AG04449 (cell line): ENCODE measurements at regions of chr5 and their contacts with region 1.

Region 1: DNA sequence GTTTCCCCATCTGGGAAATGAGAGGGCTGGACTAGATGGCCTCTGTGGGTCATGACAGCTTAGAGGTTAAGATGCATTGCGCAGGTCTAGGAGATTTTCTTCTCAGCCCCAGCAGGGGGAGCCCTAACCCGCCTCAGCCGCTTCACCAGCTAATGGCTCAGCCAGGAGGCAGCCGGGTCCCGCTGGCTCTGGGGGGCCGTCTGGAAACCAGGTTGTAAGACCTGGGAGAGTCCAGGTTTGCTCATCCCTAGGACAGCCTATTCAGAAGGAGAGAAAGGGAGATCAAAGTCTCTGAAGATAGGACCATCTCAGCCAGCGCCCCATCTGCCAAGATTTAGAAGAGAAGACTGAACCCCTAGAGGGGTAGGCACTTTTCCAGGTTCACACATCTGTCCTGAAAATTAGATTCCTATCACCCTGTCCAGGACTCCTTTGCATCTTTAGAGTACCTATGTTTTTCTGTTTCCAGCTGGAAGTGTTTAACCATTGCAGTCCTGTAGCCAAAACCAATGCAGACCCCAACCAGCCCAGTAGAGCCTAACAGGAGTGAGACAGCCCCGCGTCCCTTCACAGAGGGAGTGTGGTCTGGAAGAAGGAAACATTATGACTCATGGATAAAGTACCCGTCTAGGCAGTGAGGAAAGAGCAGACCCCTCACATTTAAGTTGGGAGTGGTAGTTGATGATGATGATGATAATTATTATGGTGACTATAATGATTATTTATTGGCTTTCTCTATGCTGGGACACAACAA is 27.5 kb downstream of the SPARC start:
- DNase-seq: no peak
- H3K4me3 ChIP-seq: no peak overlapping the region
- CTCF ChIP-seq: peak; percentile 88

Region 2: DNA sequence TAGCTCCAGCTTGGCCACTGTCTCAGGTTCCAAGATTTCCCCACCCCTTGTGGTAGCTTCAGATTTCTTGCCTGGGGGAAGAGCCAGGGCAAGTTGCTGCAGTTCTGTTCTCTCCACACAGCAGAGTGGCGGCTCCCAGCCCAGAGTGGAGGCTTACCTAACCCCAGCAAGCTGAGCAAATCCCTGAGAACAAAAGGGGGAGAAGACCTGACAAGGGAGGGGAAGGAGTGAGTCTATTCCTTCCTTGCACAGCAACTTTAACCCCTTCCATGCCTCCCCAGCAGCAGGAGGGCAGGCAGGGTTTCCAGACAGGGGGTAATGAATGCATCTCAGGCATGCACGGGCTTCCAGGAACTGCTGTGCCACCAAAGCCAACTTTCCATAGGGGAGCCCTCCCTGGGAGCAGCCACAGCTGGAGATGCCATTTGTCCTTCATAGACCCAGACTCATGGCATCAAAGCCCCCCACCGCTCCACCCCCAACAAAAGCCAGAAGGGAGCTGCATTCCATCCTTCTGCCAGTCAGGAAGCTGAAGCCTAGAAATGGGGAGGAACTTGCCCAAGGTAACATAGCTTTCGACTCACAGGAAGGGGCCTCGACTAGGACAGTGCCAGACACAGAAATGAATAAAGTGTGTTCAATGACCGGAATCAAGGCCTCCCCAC is 39.2 kb before region 1 on chr5:
- CTCF ChIA-PET with region 1: no interaction called
- POLR2A ChIA-PET with region 1: no interaction called
- DNase-seq: no peak
- H3K4me3 ChIP-seq: no peak overlapping the region
- CTCF ChIP-seq: no peak

Region 3: GRCh38 chr5:151675611-151676313 is 16.6 kb after region 1 on chr5:
- CTCF ChIA-PET with region 1: interaction called, 38 read pairs
- POLR2A ChIA-PET with region 1: interaction called, 39 read pairs
- DNase-seq: no peak
- H3K4me3 ChIP-seq: no peak overlapping the region; the same call in 1 of the 2 replicates
- CTCF ChIP-seq: no peak

Region 4: GRCh38 chr5:151699071-151699901 is 40.1 kb after region 1 on chr5:
- CTCF ChIA-PET with region 1: interaction called, 3 read pairs
- POLR2A ChIA-PET with region 1: interaction called, 12 read pairs
- DNase-seq: peak; percentile 95
- H3K4me3 ChIP-seq: no peak overlapping the region
- CTCF ChIP-seq: no peak

Region 5: DNA sequence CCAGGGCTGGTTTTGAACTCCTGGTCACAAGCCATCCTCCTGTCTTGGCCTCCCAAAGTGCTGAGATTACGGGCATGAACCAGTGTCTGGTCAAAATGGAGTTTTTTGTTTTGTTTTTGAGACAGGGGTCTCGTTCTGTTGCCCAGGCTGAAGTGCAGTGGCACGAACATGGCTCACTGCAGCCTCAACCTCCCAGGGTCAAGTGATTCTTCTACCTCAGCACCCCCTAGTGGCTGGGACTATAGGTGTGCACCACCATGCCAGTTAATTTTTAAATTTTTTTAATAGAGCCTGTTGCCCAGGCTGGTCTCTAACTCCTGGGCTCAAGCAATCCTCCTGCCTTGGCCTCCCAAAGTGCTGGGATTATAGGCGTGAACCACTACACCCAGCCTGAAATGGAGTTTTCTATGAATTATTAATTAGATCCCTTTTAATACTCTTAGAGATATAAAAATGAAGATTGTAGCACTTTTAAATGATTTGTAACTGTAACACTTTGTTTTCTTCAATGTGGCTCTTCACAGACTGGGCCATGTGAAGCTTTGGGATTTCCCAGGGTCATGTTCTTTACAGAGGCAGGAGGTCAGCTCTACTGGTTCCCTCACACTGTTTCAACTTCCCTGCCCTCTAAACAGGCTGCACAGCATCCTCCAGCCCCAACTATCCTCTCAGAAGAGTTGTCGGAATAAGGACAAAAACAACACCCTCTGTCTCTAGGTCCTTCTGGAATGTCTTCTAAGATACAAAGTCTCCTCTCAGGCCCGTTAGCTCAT is 60.2 kb after region 1 on chr5:
- CTCF ChIA-PET with region 1: interaction called, 27 read pairs
- POLR2A ChIA-PET with region 1: interaction called, 22 read pairs
- DNase-seq: no peak
- H3K4me3 ChIP-seq: no peak overlapping the region
- CTCF ChIP-seq: peak; percentile 45

Region 6: GRCh38 chr5:151771259-151772028 is 112.3 kb after region 1 on chr5 and contains the start of gene G3BP1:
- CTCF ChIA-PET with region 1: interaction called, 17 read pairs
- POLR2A ChIA-PET with region 1: interaction called, 10 read pairs
- DNase-seq: peak; percentile 100
- H3K4me3 ChIP-seq: peak within 1 kb of the TSS; percentile 87
- CTCF ChIP-seq: peak; percentile 66